Mammary epithelial cell (primary cell): ENCODE measurements at regions of chr10 and their contacts with region 1.

Region 1: GRCh38 chr10:35236739-35237138 is 99.6 kb upstream of the CCNY start:
- DNase-seq: no peak
- H3K4me3 ChIP-seq: no peak overlapping the region
- H3K27ac ChIP-seq: no peak overlapping the region
- H3K4me1 ChIP-seq: no peaks in the 10 kb centered on the region
- H3K27me3 ChIP-seq: no peaks in the 10 kb centered on the region
- CTCF ChIP-seq: peak in 1 of 2 donors; percentile 48

Region 2: GRCh38 chr10:35153716-35154479 is 82.8 kb before region 1 on chr10:
- CTCF ChIA-PET with region 1: no interaction called
- dilution Hi-C with region 1: no loop called
- in situ Hi-C with region 1: no loop called
- intact Hi-C with region 1: no loop called
- DNase-seq: no peak
- H3K4me3 ChIP-seq: no peak overlapping the region
- H3K27ac ChIP-seq: no peak overlapping the region
- H3K4me1 ChIP-seq: peaks cover 6% of the 10 kb centered on the region
- H3K27me3 ChIP-seq: no peaks in the 10 kb centered on the region
- CTCF ChIP-seq: no peak

Region 3: DNA sequence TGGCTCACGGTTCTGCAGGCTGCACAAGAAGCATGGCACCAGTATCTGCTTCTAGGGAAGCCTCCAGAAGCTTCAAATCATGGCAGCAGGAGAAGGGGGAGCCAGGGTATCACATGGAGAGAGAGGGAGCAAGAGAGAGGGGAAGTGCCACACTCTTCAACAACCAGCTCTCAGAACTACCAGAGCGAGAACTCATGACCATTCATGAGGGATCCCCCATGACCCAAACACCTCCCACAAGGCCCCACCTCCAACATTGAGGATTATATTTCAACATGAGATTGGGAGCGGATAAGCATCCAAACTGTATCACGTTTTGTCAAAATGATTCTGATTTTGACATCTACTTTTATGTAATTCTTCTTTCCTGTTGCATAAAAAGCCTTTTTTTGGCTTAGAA is 71.6 kb before region 1 on chr10:
- CTCF ChIA-PET with region 1: no interaction called
- dilution Hi-C with region 1: no loop called
- in situ Hi-C with region 1: no loop called
- intact Hi-C with region 1: no loop called
- DNase-seq: no peak
- H3K4me3 ChIP-seq: no peak overlapping the region
- H3K27ac ChIP-seq: no peak overlapping the region
- H3K4me1 ChIP-seq: no peaks in the 10 kb centered on the region
- H3K27me3 ChIP-seq: no peaks in the 10 kb centered on the region
- CTCF ChIP-seq: no peak

Region 4: GRCh38 chr10:35336084-35336831 is 99.5 kb after region 1 on chr10 and contains the start of gene CCNY:
- CTCF ChIA-PET with region 1: no interaction called
- dilution Hi-C with region 1: no loop called
- in situ Hi-C with region 1: no loop called
- intact Hi-C with region 1: loop called (anchors 2 kb)
- DNase-seq: peak; percentile 71
- H3K4me3 ChIP-seq: peak within 1 kb of the TSS; percentile 87 to 90 (median 88)
- H3K27ac ChIP-seq: peak within 1 kb of the TSS; percentile 79
- H3K4me1 ChIP-seq: peaks cover 40% of the 10 kb centered on the region
- H3K27me3 ChIP-seq: no peaks in the 10 kb centered on the region
- CTCF ChIP-seq: no peak
- total RNA-seq, gene CCNY: 32.0 to 62.3 TPM

Region 5: GRCh38 chr10:35546824-35547273 is 310.1 kb after region 1 on chr10:
- CTCF ChIA-PET with region 1: no interaction called
- dilution Hi-C with region 1: no loop called
- in situ Hi-C with region 1: loop called (anchors 25 kb)
- intact Hi-C with region 1: loop called (anchors 1 kb)
- DNase-seq: peak; percentile 95
- H3K4me3 ChIP-seq: no peak overlapping the region
- H3K27ac ChIP-seq: peak overlapping the region; percentile 79
- H3K4me1 ChIP-seq: peaks cover 26% of the 10 kb centered on the region
- H3K27me3 ChIP-seq: no peaks in the 10 kb centered on the region
- CTCF ChIP-seq: peak in 1 of 2 donors; percentile 39

Region 6: DNA sequence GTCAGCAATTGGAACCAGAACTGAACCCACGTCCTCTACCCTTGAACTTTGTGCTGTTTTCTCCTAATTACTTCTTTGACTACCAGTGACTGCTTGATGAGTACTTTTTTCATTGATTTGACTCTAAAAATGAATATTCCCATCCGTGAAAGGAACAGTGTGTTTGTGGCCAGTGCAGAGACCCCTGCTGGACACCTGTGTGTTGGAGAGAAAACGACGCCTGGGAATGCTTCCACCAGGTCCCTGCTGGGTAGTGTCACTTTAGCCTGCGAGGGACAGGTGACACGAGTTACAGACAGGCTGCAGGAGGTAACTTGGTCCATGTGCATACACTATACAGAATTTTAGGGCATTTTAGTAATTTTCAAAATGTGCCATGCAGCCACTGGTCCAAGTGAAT is 361.6 kb after region 1 on chr10:
- CTCF ChIA-PET with region 1: no interaction called
- dilution Hi-C with region 1: no loop called
- in situ Hi-C with region 1: no loop called
- intact Hi-C with region 1: loop called (anchors 1 kb)
- DNase-seq: no peak
- H3K4me3 ChIP-seq: no peak overlapping the region
- H3K27ac ChIP-seq: no peak overlapping the region
- H3K4me1 ChIP-seq: no peaks in the 10 kb centered on the region
- H3K27me3 ChIP-seq: no peaks in the 10 kb centered on the region
- CTCF ChIP-seq: peak; percentile 30 to 43

Region 7: DNA sequence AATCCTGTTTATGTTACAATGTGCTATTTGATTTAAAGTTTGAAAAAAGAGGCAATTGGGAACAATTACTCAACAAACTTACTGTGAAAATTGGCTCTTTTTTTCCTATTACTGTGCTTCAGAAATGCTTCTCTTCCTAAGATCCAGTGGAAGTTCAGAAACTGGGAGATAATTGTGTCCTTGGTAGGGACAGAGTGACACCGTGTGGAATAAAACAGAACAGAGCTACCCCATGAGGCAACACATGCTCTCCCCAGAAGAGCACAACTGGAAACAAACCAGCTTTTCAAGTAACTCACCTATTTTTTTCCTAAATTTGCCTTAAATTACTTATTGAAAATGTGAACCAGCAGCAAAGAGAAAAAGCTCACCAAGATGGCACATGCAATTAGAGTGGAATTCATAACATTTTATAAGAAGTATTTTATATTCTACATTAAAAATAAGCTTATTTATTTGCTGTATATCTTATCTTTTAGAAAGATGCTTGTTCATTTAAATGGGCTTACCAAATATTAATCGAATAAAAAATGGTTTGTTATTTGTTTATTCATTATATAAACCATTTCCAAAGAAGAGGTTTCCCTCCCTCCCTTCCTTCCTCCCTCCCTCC is 1542.6 kb after region 1 on chr10:
- CTCF ChIA-PET with region 1: interaction called, 6 read pairs
- dilution Hi-C with region 1: no loop called
- in situ Hi-C with region 1: no loop called
- intact Hi-C with region 1: loop called (anchors 2 kb)
- DNase-seq: peak; percentile 57
- H3K4me3 ChIP-seq: no peak overlapping the region
- H3K27ac ChIP-seq: no peak overlapping the region
- H3K4me1 ChIP-seq: no peaks in the 10 kb centered on the region
- H3K27me3 ChIP-seq: no peaks in the 10 kb centered on the region
- CTCF ChIP-seq: peak; percentile 71 to 76